Prostate gland (tissue), 2 donors: ENCODE measurements at regions of chr20 and their contacts with region 1.

Region 1: DNA sequence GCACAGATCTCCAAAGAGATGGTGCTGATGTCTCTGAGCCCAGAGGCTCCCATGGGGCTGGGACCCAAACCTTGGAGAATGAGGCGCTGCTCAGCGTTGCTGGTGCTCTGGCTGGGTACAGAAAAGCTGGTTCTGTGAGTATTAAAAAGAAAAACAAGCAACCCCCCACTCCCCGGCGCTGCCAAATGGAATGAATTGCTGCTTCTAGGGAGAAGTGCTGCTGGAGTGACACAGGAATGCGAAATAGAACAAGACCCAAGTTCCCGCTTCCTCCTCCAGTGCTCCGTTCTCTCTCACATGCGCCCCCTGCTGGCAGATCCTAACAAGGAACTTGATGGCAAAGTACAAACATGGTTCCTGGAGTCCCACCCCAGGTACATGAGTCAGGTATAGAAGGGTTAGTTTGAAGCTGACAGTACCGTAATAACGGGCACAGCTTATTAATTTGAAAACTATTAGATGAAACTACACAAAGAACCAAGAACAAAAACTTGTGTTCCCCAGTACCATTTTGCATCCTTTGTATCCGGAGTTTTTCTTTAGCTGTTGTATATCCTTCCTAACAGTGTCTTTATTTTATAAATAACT is 2.1 kb upstream of the DDX27 start:
- DNase-seq: peak; percentile 93
- H3K4me3 ChIP-seq: no peak overlapping the region
- H3K27ac ChIP-seq: no peak overlapping the region
- H3K4me1 ChIP-seq: peaks cover 3% of the 10 kb centered on the region
- H3K27me3 ChIP-seq: no peaks in the 10 kb centered on the region
- CTCF ChIP-seq: peak; percentile 83 to 94 (median 92)
- POLR2A ChIP-seq: no peak

Region 2: GRCh38 chr20:48635433-48636310 is 581.4 kb before region 1 on chr20:
- intact Hi-C with region 1: no loop called
- DNase-seq: no peak
- H3K4me3 ChIP-seq: no peak overlapping the region
- H3K27ac ChIP-seq: no peak overlapping the region
- H3K4me1 ChIP-seq: no peaks in the 10 kb centered on the region
- H3K27me3 ChIP-seq: no peaks in the 10 kb centered on the region
- CTCF ChIP-seq: peak; percentile 42 to 68 (median 61)
- POLR2A ChIP-seq: no peak

Region 3: DNA sequence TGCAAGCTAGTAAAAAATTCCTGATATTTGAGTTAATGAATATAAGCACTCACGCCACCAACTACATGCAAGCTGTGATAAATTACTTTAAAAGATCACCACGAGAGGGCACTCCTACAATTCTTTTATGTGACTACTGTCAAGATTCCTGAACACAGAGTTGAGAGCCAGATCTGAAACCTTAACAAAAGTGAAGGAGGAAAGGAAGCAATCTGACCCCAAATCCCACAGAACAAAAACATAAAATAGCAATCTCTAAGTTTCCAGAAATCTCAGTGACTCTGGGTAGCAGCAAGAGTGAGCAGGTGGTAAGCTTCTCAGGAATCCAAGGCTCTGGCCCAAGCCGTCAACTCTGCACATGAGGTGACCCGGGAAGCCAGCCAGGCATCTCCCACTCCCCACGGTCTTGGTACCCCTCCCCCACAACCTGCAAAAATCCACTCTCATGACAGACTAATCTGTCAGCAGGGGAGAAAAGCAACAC is 84.0 kb before region 1 on chr20:
- intact Hi-C with region 1: loop called (anchors 1 kb)
- DNase-seq: peak; percentile 61
- H3K4me3 ChIP-seq: no peak overlapping the region
- H3K27ac ChIP-seq: no peak overlapping the region
- H3K4me1 ChIP-seq: no peaks in the 10 kb centered on the region
- H3K27me3 ChIP-seq: no peaks in the 10 kb centered on the region
- CTCF ChIP-seq: peak; percentile 41 to 81 (median 62)
- POLR2A ChIP-seq: no peak

Region 4: GRCh38 chr20:49278036-49278817 is 61.1 kb after region 1 on chr20 and contains the start of gene ZNFX1:
- intact Hi-C with region 1: loop called (anchors 10 kb)
- DNase-seq: peak; percentile 99
- H3K4me3 ChIP-seq: peak within 1 kb of the TSS; percentile 71 to 84
- H3K27ac ChIP-seq: peak within 1 kb of the TSS; percentile 95 to 97
- H3K4me1 ChIP-seq: peaks cover 18% of the 10 kb centered on the region
- H3K27me3 ChIP-seq: no peaks in the 10 kb centered on the region
- CTCF ChIP-seq: no peak
- POLR2A ChIP-seq: peak; percentile 94
- total RNA-seq, gene ZNFX1: 25.6 to 32.7 TPM

Region 5: GRCh38 chr20:50163570-50164317 is 946.7 kb after region 1 on chr20:
- intact Hi-C with region 1: no loop called
- DNase-seq: no peak
- H3K4me3 ChIP-seq: no peak overlapping the region
- H3K27ac ChIP-seq: peak overlapping the region; percentile 43 to 46
- H3K4me1 ChIP-seq: no peaks in the 10 kb centered on the region
- H3K27me3 ChIP-seq: no peaks in the 10 kb centered on the region
- CTCF ChIP-seq: no peak
- POLR2A ChIP-seq: no peak